ENCODE measurements at regions of chr10 and their contacts with region 1.

Region 1: DNA sequence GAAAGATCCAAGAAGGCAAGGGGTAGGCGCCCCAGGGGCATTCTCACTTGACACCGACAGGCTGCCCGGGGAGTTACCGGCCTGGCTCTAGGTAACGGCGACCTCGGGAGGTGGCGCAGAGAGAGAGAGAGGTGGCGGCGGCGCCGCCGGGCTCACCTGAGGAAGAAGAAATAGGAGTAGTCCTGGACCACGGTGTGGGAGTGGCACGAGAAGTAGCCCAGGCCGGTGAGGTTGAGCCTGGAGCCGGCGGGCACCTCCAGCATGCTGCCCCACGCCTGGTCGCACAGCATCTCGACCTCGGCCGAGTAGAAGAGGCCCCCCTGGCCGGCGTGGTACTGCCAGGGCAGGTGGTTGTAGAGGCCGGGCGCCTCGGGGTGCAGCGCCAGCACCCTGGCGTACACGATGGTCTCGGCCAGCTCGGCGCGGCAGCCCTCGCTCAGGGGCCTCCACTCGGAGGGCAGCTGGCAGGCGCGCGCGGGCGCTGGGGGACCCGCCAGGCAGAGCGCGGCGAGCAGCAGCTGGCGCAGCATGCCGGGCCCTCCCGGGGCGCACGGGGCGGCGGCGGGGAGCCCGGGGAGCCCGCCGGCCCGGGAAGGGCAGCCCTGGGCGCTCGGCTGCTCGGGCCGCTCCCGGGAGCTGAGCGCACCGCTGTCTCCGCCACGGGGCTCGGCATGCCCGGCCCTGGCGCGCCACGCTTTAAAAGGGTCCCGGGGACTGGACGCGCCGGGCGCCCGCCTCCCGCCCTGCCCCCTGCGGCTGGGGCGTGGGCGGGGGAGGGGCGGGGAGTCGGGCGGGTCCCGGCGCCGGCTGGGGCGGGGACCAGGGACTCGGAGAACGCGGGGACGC is at the start of gene CCDC3:
- DNase-seq: peak; percentile 72 to 88
- ATAC-seq: peak; percentile 86
- H3K4me3 ChIP-seq: peak within 1 kb of the TSS; percentile 80 to 88
- H3K27ac ChIP-seq: no peak within 1 kb of the TSS
- H3K4me1 ChIP-seq: peaks cover 0 to 7% of the 10 kb centered on the region in 2 donors
- H3K27me3 ChIP-seq: no peaks in the 10 kb centered on the region
- total RNA-seq, gene CCDC3: 119 to 166 TPM

Region 2: GRCh38 chr10:12907656-12908055 is 93.6 kb before region 1 on chr10:
- intact Hi-C with region 1: loop called (anchors 5 kb)
- DNase-seq: peak in 1 of 2 donors; percentile 62
- ATAC-seq: no peak
- H3K4me3 ChIP-seq: no peak overlapping the region
- H3K27ac ChIP-seq: no peak overlapping the region
- H3K4me1 ChIP-seq: no peaks in the 10 kb centered on the region
- H3K27me3 ChIP-seq: no peaks in the 10 kb centered on the region

Region 3: DNA sequence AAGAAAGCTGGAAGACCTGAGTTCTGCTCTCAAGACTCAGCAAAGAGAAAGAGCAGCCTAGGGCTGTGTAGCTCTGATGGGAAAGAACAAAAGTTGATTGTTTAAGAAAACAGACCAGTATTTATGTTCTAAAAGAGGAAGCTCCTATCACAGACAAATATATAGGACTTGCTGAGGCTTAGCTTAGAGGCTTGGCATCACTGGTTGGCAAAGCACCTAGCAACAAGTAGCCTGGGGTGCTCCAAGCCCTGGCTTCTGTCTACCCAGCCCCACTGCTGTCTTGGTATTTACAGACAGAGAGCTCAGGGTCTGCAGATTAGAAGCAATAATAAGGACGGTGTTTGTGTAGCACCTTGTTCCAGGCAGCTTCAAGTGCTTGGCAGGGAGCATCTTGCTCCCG is 37.1 kb after region 1 on chr10:
- intact Hi-C with region 1: loop called in 1 of 2 experiments (anchors 5 kb)
- DNase-seq: no peak
- ATAC-seq: no peak
- H3K4me3 ChIP-seq: no peak overlapping the region
- H3K27ac ChIP-seq: no peak overlapping the region
- H3K4me1 ChIP-seq: peaks cover 2 to 3% of the 10 kb centered on the region in 2 donors
- H3K27me3 ChIP-seq: no peaks in the 10 kb centered on the region

Region 4: GRCh38 chr10:13056456-13057077 is 55.3 kb after region 1 on chr10:
- intact Hi-C with region 1: loop called in 1 of 2 experiments (anchors 5 kb)
- DNase-seq: no peak
- ATAC-seq: no peak
- H3K4me3 ChIP-seq: no peak overlapping the region
- H3K27ac ChIP-seq: no peak overlapping the region
- H3K4me1 ChIP-seq: no peaks in the 10 kb centered on the region
- H3K27me3 ChIP-seq: no peaks in the 10 kb centered on the region

Measured in aorta (tissue), 5 donors.